ENCODE measurements at regions of chr20 and their contacts with region 1.

Region 1: GRCh38 chr20:39264506-39265172 is 302.5 kb downstream of the DHX35 start:
- DNase-seq: peak; percentile 66
- ATAC-seq: peak; percentile 69
- H3K4me3 Mint-ChIP-seq: no peak overlapping the region
- H3K27ac Mint-ChIP-seq: no peak overlapping the region
- H3K4me1 Mint-ChIP-seq: peaks cover 5% of the 10 kb centered on the region
- H3K27me3 Mint-ChIP-seq: no peaks in the 10 kb centered on the region
- CTCF ChIP-seq: peak; percentile 91

Region 2: DNA sequence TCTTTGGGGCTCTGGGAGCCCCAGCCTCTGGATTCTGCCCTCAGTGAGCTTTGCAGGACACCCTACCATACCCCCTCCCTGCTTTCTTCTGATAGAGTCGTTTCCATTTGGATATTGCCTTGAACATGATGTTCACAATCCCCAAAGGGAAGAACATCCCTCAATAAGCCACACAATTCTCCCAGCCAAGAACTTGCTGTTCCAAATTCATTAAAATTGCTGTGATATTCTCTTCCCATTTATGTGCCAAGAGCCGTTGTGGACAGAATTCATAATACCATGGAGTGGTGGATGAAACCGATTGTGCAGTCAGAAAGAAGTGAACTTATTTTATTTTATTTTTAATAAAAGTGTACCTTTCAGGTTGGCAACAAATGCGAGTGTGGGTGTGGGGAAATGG is 206.7 kb before region 1 on chr20:
- CTCF ChIA-PET with region 1: no interaction called
- POLR2A ChIA-PET with region 1: no interaction called
- DNase-seq: no peak
- ATAC-seq: no peak
- H3K4me3 Mint-ChIP-seq: no peak overlapping the region
- H3K27ac Mint-ChIP-seq: no peak overlapping the region
- H3K4me1 Mint-ChIP-seq: no peaks in the 10 kb centered on the region
- H3K27me3 Mint-ChIP-seq: peaks cover 4% of the 10 kb centered on the region; the same call in 1 of the 2 replicates
- CTCF ChIP-seq: no peak

Region 3: GRCh38 chr20:39282619-39283392 is 18.2 kb after region 1 on chr20:
- CTCF ChIA-PET with region 1: interaction called, 33 read pairs
- POLR2A ChIA-PET with region 1: no interaction called
- DNase-seq: peak; percentile 73
- ATAC-seq: peak; percentile 85
- H3K4me3 Mint-ChIP-seq: peak overlapping the region; percentile 32
- H3K27ac Mint-ChIP-seq: no peak overlapping the region
- H3K4me1 Mint-ChIP-seq: peaks cover 50% of the 10 kb centered on the region
- H3K27me3 Mint-ChIP-seq: peaks cover 53% of the 10 kb centered on the region
- CTCF ChIP-seq: no peak

Region 4: GRCh38 chr20:39289316-39289715 is 24.7 kb after region 1 on chr20:
- CTCF ChIA-PET with region 1: interaction called, 17 read pairs
- POLR2A ChIA-PET with region 1: no interaction called
- DNase-seq: peak; percentile 47
- ATAC-seq: peak; percentile 81
- H3K4me3 Mint-ChIP-seq: no peak overlapping the region
- H3K27ac Mint-ChIP-seq: 0 out of 2 replicates have a peak overlapping the region, but pooled peaks have one; percentile 3
- H3K4me1 Mint-ChIP-seq: peaks cover 62% of the 10 kb centered on the region
- H3K27me3 Mint-ChIP-seq: peaks cover 19% of the 10 kb centered on the region
- CTCF ChIP-seq: peak; percentile 38; the same call in 1 of the 2 replicates

Region 5: DNA sequence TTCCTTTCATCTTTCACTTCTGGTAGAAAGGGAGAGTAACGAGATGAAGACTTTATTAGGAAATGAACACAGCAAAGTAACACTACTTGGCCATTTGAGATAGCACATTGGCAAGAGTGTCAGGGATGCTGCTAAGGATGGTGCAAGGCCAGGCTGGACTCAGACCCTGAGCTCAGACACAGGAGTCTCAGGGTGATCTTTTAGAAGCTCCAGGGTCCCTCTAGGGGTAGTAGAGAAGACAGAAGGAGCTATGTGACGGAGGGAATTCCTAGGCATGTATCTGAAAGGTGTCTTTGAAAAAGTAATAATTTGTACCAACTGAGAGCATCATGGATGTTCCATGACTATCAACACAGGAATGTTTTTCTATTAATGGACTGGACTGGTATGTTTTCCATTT is 134.0 kb after region 1 on chr20:
- CTCF ChIA-PET with region 1: interaction called, 34 read pairs
- POLR2A ChIA-PET with region 1: no interaction called
- DNase-seq: peak; percentile 13
- ATAC-seq: peak; percentile 84
- H3K4me3 Mint-ChIP-seq: no peak overlapping the region
- H3K27ac Mint-ChIP-seq: no peak overlapping the region
- H3K4me1 Mint-ChIP-seq: no peaks in the 10 kb centered on the region
- H3K27me3 Mint-ChIP-seq: peaks cover 2% of the 10 kb centered on the region
- CTCF ChIP-seq: no peak